Tibial artery (tissue), 4 donors: ENCODE measurements at regions of chr22 and their contacts with region 1.

Region 1: GRCh38 chr22:32796865-32797573 is 4.5 kb upstream of the TIMP3 start:
- DNase-seq: peak; percentile 78 to 85
- H3K4me3 ChIP-seq: no peak overlapping the region
- H3K27ac ChIP-seq: no peak overlapping the region
- H3K4me1 ChIP-seq: peaks cover 0 to 15% (median 11%) of the 10 kb centered on the region in 4 donors
- H3K27me3 ChIP-seq: no peaks in the 10 kb centered on the region
- CTCF ChIP-seq: peak; percentile 83 to 93

Region 2: GRCh38 chr22:32528984-32529982 is 267.7 kb before region 1 on chr22:
- intact Hi-C with region 1: loop called (anchors 1 kb)
- DNase-seq: peak; percentile 91 to 92
- H3K4me3 ChIP-seq: peak overlapping the region in 1 of 2 donors; percentile 3
- H3K27ac ChIP-seq: peak overlapping the region; percentile 9 to 38
- H3K4me1 ChIP-seq: peaks cover 4 to 39% (median 24%) of the 10 kb centered on the region in 4 donors
- H3K27me3 ChIP-seq: peaks cover 0 to 10% of the 10 kb centered on the region in 2 donors
- CTCF ChIP-seq: peak; percentile 84 to 95

Region 3: GRCh38 chr22:32622004-32622743 is 174.8 kb before region 1 on chr22:
- intact Hi-C with region 1: loop called (anchors 10 kb)
- DNase-seq: peak; percentile 65 to 78
- H3K4me3 ChIP-seq: peak overlapping the region in 1 of 2 donors; percentile 13
- H3K27ac ChIP-seq: peak overlapping the region; percentile 89 to 91
- H3K4me1 ChIP-seq: peaks cover 5 to 70% (median 62%) of the 10 kb centered on the region in 4 donors
- H3K27me3 ChIP-seq: no peaks in the 10 kb centered on the region
- CTCF ChIP-seq: no peak

Region 4: DNA sequence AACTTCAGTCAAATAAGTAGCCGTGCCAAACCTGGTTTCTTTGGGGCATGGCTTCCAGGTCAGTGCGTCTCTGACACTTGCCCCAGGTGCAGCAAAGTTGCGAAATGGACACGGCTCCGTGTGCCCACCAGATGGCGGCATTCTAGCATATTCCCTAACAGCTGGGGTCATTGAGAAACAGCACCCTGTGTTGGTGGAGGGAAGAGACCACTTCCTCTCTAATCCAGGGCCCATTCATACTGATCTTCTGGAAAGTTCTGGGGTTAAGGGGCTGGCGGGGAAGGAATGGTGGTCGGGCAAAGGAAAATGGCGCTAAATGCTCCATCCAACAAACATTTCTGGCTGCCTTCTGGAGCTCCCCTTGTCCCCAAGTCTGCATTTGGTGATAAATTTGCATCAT is 136.7 kb before region 1 on chr22:
- intact Hi-C with region 1: loop called (anchors 5 kb)
- DNase-seq: peak; percentile 71 to 80
- H3K4me3 ChIP-seq: no peak overlapping the region
- H3K27ac ChIP-seq: no peak overlapping the region
- H3K4me1 ChIP-seq: peaks cover 0 to 8% (median 2%) of the 10 kb centered on the region in 4 donors
- H3K27me3 ChIP-seq: no peaks in the 10 kb centered on the region
- CTCF ChIP-seq: peak; percentile 57 to 79

Region 5: GRCh38 chr22:32850591-32851517 is 53.8 kb after region 1 on chr22:
- intact Hi-C with region 1: loop called (anchors 5 kb)
- DNase-seq: peak; percentile 95 to 96
- H3K4me3 ChIP-seq: no peak overlapping the region
- H3K27ac ChIP-seq: peak overlapping the region; percentile 78 to 96
- H3K4me1 ChIP-seq: peaks cover 5 to 90% (median 79%) of the 10 kb centered on the region in 4 donors
- H3K27me3 ChIP-seq: no peaks in the 10 kb centered on the region
- CTCF ChIP-seq: peak in 1 of 2 experiments; percentile 4

Region 6: GRCh38 chr22:32985899-32986765 is 189.1 kb after region 1 on chr22:
- intact Hi-C with region 1: loop called (anchors 2 kb)
- DNase-seq: peak; percentile 79 to 81
- H3K4me3 ChIP-seq: no peak overlapping the region
- H3K27ac ChIP-seq: no peak overlapping the region
- H3K4me1 ChIP-seq: peaks cover 0 to 4% (median 0%) of the 10 kb centered on the region in 4 donors
- H3K27me3 ChIP-seq: peaks cover 0 to 4% of the 10 kb centered on the region in 2 donors
- CTCF ChIP-seq: peak; percentile 91 to 94